ENCODE measurements at regions of chr19 and their contacts with region 1.

Region 1: GRCh38 chr19:4851551-4852290 is 15.7 kb downstream of the PLIN3 start:
- DNase-seq: peak; percentile 72 to 75
- H3K4me3 ChIP-seq: no peak overlapping the region
- H3K27ac ChIP-seq: no peak overlapping the region
- H3K4me1 ChIP-seq: no peaks in the 10 kb centered on the region
- H3K27me3 ChIP-seq: no peaks in the 10 kb centered on the region
- CTCF ChIP-seq: peak; percentile 85 to 91 (median 88)
- POLR2A ChIP-seq: no peak

Region 2: GRCh38 chr19:4390567-4391305 is 461.0 kb before region 1 on chr19:
- intact Hi-C with region 1: no loop called
- DNase-seq: no peak
- H3K4me3 ChIP-seq: no peak overlapping the region
- H3K27ac ChIP-seq: peak overlapping the region; percentile 57 to 81
- H3K4me1 ChIP-seq: peaks cover 6 to 35% of the 10 kb centered on the region in 2 donors
- H3K27me3 ChIP-seq: no peaks in the 10 kb centered on the region
- CTCF ChIP-seq: no peak
- POLR2A ChIP-seq: no peak

Region 3: GRCh38 chr19:4638828-4639530 is 212.7 kb before region 1 on chr19 and contains the start of gene TNFAIP8L1:
- intact Hi-C with region 1: no loop called
- DNase-seq: peak; percentile 94 to 96
- H3K4me3 ChIP-seq: peak within 1 kb of the TSS; percentile 63 to 66
- H3K27ac ChIP-seq: peak within 1 kb of the TSS; percentile 66 to 76
- H3K4me1 ChIP-seq: peaks cover 0 to 18% of the 10 kb centered on the region in 2 donors
- H3K27me3 ChIP-seq: no peaks in the 10 kb centered on the region
- CTCF ChIP-seq: no peak
- POLR2A ChIP-seq: no peak
- total RNA-seq, gene TNFAIP8L1: 0.77 to 20.6 (median 9.1) TPM

Region 4: DNA sequence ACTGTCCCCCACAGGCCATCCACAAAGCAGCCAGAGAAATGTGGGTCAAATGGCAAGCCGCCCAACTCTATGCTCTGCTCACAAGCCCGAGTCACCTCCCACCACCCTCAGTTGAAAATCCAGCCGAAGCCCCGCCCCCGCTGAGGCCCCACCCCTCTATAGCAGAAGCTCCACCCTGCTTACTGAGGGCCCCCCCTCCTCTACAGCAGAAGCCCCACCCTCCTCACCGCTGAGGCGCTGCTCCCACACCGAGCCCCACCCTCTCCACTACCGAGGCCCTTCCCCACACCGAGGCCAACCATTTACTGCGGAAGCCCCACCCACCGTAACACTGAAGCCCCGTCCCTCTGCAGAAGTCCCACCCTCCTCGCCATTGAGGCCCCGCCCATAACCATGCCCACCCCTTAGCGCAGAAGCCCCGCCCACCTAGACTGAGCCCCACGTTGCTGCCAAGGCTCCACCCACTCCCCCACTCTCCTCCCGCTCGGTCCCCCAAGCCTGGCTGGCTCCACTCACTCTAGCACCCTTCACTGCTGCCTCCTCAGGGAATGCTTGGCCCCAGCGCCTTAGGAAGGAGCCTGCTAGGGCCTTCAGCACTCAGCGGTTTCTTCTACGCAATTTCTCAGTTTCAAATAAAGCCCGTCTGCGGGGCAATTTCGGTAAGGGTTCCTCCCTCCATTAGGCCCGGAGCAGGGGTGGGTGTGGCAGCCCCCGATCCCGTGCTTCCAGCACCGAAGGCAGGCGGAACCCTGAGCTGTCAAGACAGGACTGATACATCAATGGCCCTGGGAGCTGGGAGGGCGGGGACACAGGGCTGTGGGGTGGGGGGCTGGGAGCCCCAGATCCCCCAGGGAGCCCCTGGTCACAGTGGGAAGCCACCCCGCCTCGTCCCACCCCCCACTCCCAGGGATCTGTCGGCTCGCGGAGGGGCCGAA is 172.6 kb before region 1 on chr19:
- intact Hi-C with region 1: no loop called
- DNase-seq: peak; percentile 38 to 47
- H3K4me3 ChIP-seq: no peak overlapping the region
- H3K27ac ChIP-seq: no peak overlapping the region
- H3K4me1 ChIP-seq: no peaks in the 10 kb centered on the region
- H3K27me3 ChIP-seq: no peaks in the 10 kb centered on the region
- CTCF ChIP-seq: no peak
- POLR2A ChIP-seq: no peak

Region 5: GRCh38 chr19:4811328-4812131 is 40.2 kb before region 1 on chr19:
- intact Hi-C with region 1: loop called (anchors 2 kb)
- DNase-seq: peak; percentile 78
- H3K4me3 ChIP-seq: no peak overlapping the region
- H3K27ac ChIP-seq: peak overlapping the region; percentile 90 to 94
- H3K4me1 ChIP-seq: no peaks in the 10 kb centered on the region
- H3K27me3 ChIP-seq: no peaks in the 10 kb centered on the region
- CTCF ChIP-seq: peak; percentile 70 to 87 (median 77)
- POLR2A ChIP-seq: no peak

Region 6: GRCh38 chr19:4988770-4989251 is 137.1 kb after region 1 on chr19:
- intact Hi-C with region 1: no loop called
- DNase-seq: peak; percentile 84 to 85
- H3K4me3 ChIP-seq: no peak overlapping the region
- H3K27ac ChIP-seq: peak overlapping the region; percentile 66 to 69
- H3K4me1 ChIP-seq: peaks cover 0 to 13% of the 10 kb centered on the region in 2 donors
- H3K27me3 ChIP-seq: no peaks in the 10 kb centered on the region
- CTCF ChIP-seq: no peak
- POLR2A ChIP-seq: no peak

Measured in uterus (tissue), 4 donors.